GM18951 (cell line): ENCODE measurements at regions of chr4 and their contacts with region 1.

Region 1: GRCh38 chr4:164888096-164888715 is 11.2 kb downstream of the APELA start:
- POLR2A ChIP-seq: no peak

Region 2: DNA sequence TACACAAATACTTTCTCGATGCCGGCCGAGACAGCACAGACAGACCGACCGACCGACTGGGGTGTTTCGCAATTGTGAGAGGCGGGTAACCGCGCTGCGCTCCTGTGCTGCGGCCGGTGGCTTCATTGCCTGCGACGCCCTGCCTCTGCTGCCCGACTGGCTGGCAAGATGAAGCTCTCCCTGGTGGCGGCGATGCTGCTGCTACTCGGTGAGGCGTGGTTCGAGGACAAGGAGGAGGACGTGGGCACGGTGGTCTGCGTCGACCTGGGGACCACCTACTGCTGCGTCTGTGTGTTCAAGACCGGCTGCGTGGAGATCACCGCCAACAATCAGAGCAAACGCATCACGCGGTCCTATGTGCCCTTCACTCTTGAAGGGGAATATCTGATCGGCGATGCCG is 700.0 kb before region 1 on chr4:
- in situ Hi-C with region 1: no loop called
- POLR2A ChIP-seq: no peak

Region 3: DNA sequence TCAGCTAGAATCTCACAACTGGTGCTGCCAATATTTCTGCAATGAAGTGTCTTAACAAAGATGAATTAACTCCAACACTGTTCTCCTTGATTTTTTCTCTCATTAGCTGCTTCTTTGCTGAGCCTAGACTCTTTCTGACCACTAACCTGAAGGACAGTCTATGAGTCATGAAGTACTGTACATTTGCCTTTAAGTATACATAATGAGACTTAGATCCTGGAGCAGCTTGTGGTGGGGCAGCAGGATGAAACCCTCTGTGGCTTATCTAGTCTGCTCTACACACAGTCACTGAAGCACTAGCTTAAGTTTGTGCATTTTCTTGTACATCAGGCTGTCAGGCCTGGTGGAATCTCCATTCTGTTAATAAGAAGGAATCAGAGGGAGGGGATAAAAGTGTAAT is 441.7 kb before region 1 on chr4:
- in situ Hi-C with region 1: no loop called
- POLR2A ChIP-seq: no peak

Region 4: GRCh38 chr4:164799410-164799809 is 88.8 kb before region 1 on chr4:
- in situ Hi-C with region 1: loop called (anchors 5 kb)
- POLR2A ChIP-seq: no peak